H1 (cell line): ENCODE measurements at regions of chrX and their contacts with region 1.

Region 1: DNA sequence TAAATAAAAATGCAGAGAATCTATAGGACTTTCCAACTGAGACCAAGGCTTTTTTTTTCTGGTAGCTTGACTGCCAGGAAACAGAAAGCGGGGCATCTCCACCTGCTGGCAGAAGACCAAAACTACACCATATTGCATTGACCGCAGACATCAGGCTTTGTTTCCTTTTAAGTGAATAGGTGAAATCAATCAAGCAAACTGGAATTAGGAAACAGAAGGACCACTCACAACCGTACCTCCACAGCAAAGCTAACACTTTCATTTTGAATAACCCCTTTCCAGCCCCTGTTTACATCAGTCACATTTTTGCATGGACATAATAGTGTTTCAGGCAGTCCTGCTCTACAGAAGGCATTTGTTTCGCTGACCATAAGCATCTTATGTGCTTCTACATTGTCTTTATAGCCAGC is 218.2 kb downstream of the IDS start:
- DNase-seq: peak in 1 of 2 experiments; percentile 42
- H3K4me3 ChIP-seq: no peak overlapping the region
- H3K27ac ChIP-seq: no peak overlapping the region
- H3K4me1 ChIP-seq: no peaks in the 10 kb centered on the region
- H3K27me3 ChIP-seq: no peaks in the 10 kb centered on the region
- CTCF ChIP-seq: peak; percentile 22 to 52 (median 50)
- EP300 ChIP-seq: no peak
- POLR2A ChIP-seq: no peak
- RAD21 ChIP-seq: peak; percentile 76 to 84

Region 2: DNA sequence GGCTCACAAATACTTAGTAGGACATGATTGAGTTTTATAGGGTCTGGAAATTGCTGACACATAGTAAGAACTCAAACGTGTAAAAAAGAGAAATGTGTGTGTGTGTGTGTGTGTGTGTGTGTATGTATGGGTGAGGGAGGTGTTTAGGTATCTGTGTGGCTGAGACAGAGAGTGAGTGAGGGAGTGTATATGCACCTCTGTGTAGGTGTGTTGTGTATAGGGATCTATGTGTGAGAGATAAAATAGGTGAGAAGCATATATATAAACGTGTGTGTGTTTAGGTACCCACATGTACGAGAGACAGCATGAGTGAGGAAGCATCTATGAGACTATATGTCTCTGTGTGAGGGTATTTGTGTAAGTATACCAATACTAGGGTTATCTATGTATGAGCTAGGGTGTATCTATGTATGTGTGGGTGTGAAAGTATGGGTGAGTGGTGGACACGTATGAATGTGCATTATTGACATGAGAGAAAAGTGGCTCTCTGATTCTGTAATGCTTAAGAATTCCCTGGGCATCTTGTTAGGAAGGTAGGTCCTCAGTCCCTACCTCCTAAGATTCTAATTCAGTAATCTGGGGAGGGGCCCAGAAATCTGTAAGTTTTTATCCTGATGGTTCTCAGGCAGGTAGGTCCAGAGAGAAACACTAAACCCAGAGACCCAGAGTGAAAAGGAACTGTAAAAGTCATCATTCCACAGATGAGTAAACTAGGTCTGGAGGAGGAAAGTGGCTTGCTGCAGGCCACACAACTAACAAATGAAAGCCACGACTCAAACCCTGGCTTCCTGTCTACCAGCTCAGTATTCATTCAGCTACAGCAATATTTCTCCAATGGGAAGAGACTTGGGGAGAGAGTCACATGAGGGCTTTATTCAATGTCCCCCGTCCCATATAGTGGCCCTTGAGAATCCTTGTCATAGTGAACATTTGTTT is 18.8 kb before region 1 on chrX:
- CTCF ChIA-PET with region 1: interaction called, 11 read pairs
- POLR2A ChIA-PET with region 1: no interaction called
- DNase-seq: no peak
- H3K4me3 ChIP-seq: no peak overlapping the region
- H3K27ac ChIP-seq: no peak overlapping the region
- H3K4me1 ChIP-seq: no peaks in the 10 kb centered on the region
- H3K27me3 ChIP-seq: no peaks in the 10 kb centered on the region
- CTCF ChIP-seq: no peak
- EP300 ChIP-seq: no peak
- POLR2A ChIP-seq: no peak
- RAD21 ChIP-seq: no peak